Thyroid gland (tissue), 4 donors: ENCODE measurements at regions of chr2 and their contacts with region 1.

Region 1: GRCh38 chr2:6352906-6353515 is 512.7 kb downstream of the CMPK2 start:
- DNase-seq: peak; percentile 67 to 78
- H3K4me3 ChIP-seq: no peak overlapping the region
- H3K27ac ChIP-seq: no peak overlapping the region
- H3K4me1 ChIP-seq: no peaks in the 10 kb centered on the region
- H3K27me3 ChIP-seq: no peaks in the 10 kb centered on the region
- CTCF ChIP-seq: peak; percentile 40 to 89 (median 77)
- POLR2A ChIP-seq: no peak

Region 2: GRCh38 chr2:6254441-6254840 is 98.6 kb before region 1 on chr2:
- intact Hi-C with region 1: no loop called
- DNase-seq: no peak
- H3K4me3 ChIP-seq: no peak overlapping the region
- H3K27ac ChIP-seq: no peak overlapping the region
- H3K4me1 ChIP-seq: no peaks in the 10 kb centered on the region
- H3K27me3 ChIP-seq: no peaks in the 10 kb centered on the region
- CTCF ChIP-seq: no peak
- POLR2A ChIP-seq: no peak

Region 3: GRCh38 chr2:6526093-6526824 is 173.2 kb after region 1 on chr2:
- intact Hi-C with region 1: loop called (anchors 10 kb)
- DNase-seq: peak; percentile 35 to 39
- H3K4me3 ChIP-seq: no peak overlapping the region
- H3K27ac ChIP-seq: no peak overlapping the region
- H3K4me1 ChIP-seq: no peaks in the 10 kb centered on the region
- H3K27me3 ChIP-seq: no peaks in the 10 kb centered on the region
- CTCF ChIP-seq: peak in 5 of 6 experiments; percentile 30 to 70 (median 62)
- POLR2A ChIP-seq: no peak

Region 4: GRCh38 chr2:6773007-6773693 is 420.1 kb after region 1 on chr2:
- intact Hi-C with region 1: loop called (anchors 5 kb)
- DNase-seq: peak; percentile 46 to 57
- H3K4me3 ChIP-seq: no peak overlapping the region
- H3K27ac ChIP-seq: no peak overlapping the region
- H3K4me1 ChIP-seq: no peaks in the 10 kb centered on the region
- H3K27me3 ChIP-seq: no peaks in the 10 kb centered on the region
- CTCF ChIP-seq: peak; percentile 77 to 93 (median 86)
- POLR2A ChIP-seq: no peak